Cardiac septum (tissue), 1 donor: ENCODE measurements at regions of chr11 and their contacts with region 1.

Region 1: DNA sequence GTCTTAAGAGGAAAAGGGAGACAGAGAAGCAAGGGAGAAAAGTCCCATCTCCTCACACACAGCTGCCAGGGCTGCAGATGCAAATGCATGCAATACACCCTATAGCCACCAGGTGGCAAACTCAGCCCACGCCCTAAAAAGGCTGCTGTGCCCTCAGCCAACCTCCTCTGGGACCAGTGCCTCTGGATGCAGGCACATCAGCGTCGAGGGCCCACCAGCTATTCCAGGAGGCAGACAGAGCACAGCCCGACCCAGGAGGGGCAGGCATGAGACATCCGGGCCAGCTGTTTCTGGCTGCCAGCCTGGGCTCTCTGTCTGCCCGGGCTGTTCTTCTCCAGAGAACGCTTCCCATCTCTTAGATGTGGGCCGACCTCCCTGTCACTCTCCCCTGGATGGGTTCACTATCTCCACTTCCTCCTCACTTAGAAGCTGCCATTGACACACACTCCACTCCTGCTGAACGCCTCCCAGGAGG is 39.7 kb downstream of the TPBGL start:
- DNase-seq: peak; percentile 92

Region 2: DNA sequence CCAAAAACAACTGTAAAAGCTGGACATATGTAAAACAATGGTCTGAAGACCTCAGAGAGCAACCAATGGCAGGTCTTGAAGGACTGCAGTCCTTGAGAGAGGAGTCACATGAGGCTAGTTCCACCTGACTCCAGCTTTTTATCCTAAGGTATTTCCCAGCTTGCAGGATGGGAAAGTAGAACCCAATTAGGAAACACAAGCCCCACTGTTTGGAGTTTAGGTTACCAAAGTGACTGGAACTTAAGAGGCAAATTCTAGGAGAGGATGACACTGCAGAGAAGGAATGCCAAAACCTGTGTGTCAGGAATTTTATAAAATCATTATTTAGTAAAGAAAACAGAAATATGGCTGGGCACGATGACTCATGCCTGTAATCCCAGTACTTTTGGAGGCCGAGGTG is 202.0 kb before region 1 on chr11:
- intact Hi-C with region 1: no loop called
- DNase-seq: no peak

Region 3: DNA sequence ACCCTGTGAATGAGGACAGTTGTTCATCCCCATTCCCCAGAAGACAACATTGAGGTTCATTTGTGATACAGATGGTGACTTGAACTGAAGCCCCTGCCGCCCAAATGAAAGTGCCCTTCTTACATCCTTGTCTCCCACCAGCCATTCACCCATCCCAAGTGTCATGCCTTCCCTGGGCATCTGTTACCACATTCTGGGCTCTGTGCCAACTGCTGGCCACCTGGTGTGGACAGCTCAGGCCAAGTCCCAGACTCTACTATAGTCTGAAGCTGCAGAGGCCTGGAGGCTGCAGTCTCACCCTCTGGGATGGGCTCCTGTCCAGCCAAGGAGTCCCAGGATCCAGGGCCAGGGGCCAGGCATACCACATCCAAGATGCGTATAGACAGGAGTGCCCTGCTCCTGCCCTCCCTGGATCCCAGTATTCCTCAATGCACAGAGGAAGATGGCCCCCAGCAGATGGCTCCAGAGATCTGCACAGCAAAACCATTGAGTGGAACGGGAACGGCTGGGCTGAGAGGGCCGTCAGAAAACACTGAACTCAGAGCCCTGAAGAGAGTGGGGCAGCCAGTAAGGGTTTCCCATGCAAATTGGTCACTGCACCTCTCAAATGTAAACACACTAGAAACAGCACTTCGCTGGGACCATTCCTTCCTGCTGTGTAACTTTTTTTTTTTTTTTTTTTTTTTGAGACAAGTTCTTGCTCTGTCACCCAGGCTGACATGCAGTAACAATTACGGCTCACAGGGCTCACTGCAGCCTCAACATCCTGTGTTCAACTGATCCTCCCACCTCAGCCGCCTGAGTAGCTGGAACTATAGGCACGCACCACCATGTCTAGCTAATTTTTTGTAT is 48.4 kb after region 1 on chr11:
- intact Hi-C with region 1: loop called (anchors 1 kb)
- DNase-seq: no peak

Region 4: DNA sequence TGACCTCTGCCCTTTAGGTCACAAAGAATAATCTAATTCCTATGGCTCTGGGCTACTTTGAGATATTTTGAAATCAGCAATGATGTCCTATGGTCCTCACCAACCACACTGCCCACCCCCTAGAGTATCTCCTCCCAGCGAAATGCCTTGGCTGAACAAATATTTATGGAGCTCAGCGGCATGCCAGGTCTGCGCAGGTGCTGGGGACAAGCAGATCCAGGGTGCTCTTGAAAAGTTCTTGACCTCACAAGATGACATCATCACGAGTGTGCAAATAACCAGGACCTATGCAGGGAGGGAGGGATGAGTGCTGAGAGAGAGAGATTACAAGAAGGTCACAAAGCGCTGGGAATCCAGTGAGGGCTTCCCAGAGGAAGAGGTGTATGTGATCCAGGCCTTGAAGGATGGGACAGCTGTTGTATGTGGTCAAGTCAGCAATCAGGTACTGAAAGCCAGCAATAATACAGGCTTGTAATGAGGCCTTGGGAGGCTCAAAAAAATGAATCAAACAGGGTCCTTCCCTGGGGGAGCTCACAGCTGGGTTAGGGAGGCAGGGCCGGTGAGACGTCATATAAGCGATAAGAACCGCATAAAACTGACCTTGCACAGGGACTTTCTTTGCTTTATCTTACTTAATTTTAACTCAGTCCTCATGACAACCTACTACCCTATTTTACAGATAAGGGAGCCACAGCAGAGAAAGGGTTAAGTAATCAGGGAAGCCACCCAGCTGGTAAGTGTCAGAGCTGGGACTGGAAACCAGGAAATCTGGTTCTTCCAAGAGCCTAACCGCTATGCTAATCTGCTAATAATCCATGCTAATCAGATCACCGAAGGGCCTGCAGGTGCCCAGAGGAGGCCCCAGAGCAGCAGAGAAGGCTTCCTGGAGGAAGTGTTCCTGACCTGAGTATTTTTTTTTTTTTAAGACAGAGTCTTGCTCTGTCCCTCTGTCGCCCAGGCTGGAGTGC is 62.9 kb after region 1 on chr11:
- intact Hi-C with region 1: no loop called
- DNase-seq: no peak

Region 5: DNA sequence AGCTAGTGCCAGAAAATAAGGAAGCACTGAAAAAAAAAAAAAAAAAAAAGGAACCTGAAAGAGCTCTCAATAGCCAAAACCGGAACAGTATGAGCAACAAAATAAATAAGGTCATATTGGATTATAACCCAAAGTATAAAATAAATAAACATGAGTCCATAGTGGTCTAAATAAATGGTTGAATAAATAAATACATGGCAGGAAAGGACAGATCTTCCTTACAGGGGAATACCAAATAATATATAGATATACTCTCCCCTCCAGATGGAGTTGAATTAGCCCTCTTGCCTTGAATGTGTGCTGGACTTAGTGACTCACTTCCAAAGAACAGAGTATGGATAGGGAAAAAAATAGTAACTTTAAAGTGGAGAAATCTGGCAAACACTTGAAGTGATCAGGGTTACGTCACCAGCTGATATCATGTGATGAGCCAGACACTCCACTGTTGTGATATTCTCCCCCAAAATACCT is 85.5 kb after region 1 on chr11:
- intact Hi-C with region 1: no loop called
- DNase-seq: no peak

Region 6: GRCh38 chr11:75582895-75583717 is 302.8 kb after region 1 on chr11:
- intact Hi-C with region 1: no loop called
- DNase-seq: no peak